ENCODE measurements at regions of chr7 and their contacts with region 1.

Region 1: GRCh38 chr7:1412322-1413261 is 46.7 kb downstream of the MICALL2 start:
- DNase-seq: peak; percentile 77 to 92 (median 86)
- ATAC-seq: peak; percentile 84
- H3K4me3 ChIP-seq: no peak overlapping the region
- H3K27ac ChIP-seq: no peak overlapping the region
- H3K4me1 ChIP-seq: peaks cover 10% of the 10 kb centered on the region
- H3K27me3 ChIP-seq: peaks cover 0 to 19% of the 10 kb centered on the region in 2 donors
- CTCF ChIP-seq: peak; percentile 51 to 91 (median 67)
- POLR2A ChIP-seq: no peak

Region 2: GRCh38 chr7:883055-884021 is 529.3 kb before region 1 on chr7:
- intact Hi-C with region 1: no loop called
- DNase-seq: peak in 3 of 4 donors; percentile 42 to 46 (median 45)
- ATAC-seq: no peak
- H3K4me3 ChIP-seq: no peak overlapping the region
- H3K27ac ChIP-seq: peak overlapping the region in 3 of 4 donors; percentile 23 to 51 (median 49)
- H3K4me1 ChIP-seq: peaks cover 76% of the 10 kb centered on the region
- H3K27me3 ChIP-seq: no peaks in the 10 kb centered on the region
- CTCF ChIP-seq: no peak
- POLR2A ChIP-seq: no peak

Region 3: DNA sequence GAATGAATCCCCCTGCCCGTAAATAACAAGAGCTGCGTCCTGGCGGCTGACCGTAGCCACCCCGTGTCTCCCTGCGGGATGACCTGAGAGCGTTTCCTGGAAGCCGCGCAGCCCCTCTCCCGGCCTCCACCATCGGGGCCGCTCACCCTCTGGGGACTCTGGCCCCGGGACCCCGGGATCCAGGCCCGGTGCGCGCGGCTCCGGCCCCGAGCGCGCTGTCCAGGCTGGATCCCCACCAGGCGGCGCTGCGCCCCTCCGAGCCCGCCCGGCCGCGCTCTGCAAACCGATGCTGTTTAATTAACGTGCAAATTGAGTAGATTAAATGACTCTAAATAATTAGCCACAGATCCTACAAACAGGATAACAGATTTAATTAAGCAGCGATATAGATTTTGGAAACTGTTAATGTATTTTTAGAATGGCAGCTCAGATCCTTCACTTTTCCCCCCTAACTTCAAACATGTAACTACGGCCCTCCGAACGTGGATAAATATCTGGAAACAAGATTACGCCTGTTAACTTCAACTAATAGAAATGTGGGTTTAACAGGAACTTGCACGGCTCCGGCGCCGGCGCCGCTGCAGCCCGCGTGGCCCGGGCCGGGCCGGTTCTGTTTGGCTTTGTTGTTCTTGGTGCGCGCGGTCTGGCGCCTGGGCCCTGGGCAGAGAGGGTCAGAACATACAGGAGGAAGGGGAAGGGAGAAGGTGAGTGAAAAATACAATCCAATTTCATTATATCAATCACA is 187.0 kb before region 1 on chr7:
- intact Hi-C with region 1: loop called (anchors 10 kb)
- DNase-seq: peak in 2 of 4 donors; percentile 26 to 29
- ATAC-seq: no peak
- H3K4me3 ChIP-seq: no peak overlapping the region
- H3K27ac ChIP-seq: no peak overlapping the region
- H3K4me1 ChIP-seq: peaks cover 9% of the 10 kb centered on the region
- H3K27me3 ChIP-seq: peaks cover 14 to 59% of the 10 kb centered on the region in 2 donors
- CTCF ChIP-seq: peak; percentile 40 to 85 (median 59)
- POLR2A ChIP-seq: no peak

Region 4: GRCh38 chr7:1447551-1448244 is 35.1 kb after region 1 on chr7:
- intact Hi-C with region 1: no loop called
- DNase-seq: peak in 1 of 4 donors; percentile 53
- ATAC-seq: peak; percentile 43
- H3K4me3 ChIP-seq: no peak overlapping the region
- H3K27ac ChIP-seq: peak overlapping the region in 2 of 4 donors; percentile 44 to 68
- H3K4me1 ChIP-seq: peaks cover 3% of the 10 kb centered on the region
- H3K27me3 ChIP-seq: no peaks in the 10 kb centered on the region
- CTCF ChIP-seq: no peak
- POLR2A ChIP-seq: no peak

Measured in body of pancreas (tissue), 4 donors.